Colonic mucosa (tissue), 4 donors: ENCODE measurements at regions of chr3 and their contacts with region 1.

Region 1: GRCh38 chr3:128123538-128124368 is at the start of gene RUVBL1:
- DNase-seq: peak; percentile 97
- H3K4me3 ChIP-seq: peak within 1 kb of the TSS; percentile 95
- H3K27ac ChIP-seq: peak within 1 kb of the TSS; percentile 38
- H3K4me1 ChIP-seq: no peaks in the 10 kb centered on the region
- H3K27me3 ChIP-seq: no peaks in the 10 kb centered on the region
- CTCF ChIP-seq: no peak
- total RNA-seq, gene RUVBL1: 16.1 to 48.2 TPM

Region 2: GRCh38 chr3:128075516-128076482 is 48.0 kb before region 1 on chr3:
- intact Hi-C with region 1: loop called (anchors 10 kb)
- DNase-seq: peak; percentile 94
- H3K4me3 ChIP-seq: peak overlapping the region; percentile 45
- H3K27ac ChIP-seq: peak overlapping the region; percentile 26
- H3K4me1 ChIP-seq: peaks cover 8% of the 10 kb centered on the region
- H3K27me3 ChIP-seq: no peaks in the 10 kb centered on the region
- CTCF ChIP-seq: peak; percentile 98

Region 3: DNA sequence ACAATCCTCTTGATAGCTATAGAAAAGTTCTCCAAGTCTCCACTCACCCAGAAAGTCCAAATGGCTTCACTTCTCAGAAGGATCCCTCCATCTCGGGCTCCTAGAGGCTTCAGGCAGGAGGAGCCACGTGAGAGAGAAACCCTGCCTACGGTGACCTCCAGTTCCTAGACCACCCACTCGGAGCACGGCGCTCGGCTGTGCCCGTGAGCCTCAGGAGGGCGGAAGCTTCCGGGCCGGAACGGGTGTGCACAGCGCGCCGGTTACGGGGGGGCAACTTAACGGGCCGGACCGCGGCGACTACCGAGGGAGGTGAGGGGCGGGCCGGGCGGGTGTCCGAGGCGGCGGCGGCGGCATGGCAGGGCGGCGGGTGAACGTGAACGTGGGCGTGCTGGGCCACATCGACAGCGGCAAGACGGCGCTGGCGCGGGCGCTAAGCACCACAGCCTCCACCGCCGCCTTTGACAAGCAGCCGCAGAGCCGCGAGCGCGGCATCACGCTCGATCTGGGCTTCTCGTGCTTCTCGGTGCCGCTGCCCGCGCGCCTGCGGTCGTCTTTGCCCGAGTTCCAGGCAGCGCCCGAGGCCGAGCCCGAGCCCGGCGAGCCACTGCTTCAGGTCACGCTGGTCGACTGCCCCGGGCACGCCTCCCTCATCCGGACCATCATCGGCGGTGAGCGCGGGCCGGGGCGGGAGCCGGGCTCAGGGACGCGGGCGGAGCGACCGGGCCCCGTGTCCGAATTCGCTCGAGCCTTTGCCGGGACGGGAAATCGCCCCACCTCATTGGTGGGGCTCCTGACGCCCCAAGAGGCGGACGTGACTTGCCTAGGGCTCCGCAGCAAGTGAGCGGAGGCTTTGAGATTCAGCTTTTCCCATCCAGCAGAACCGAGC is 29.6 kb after region 1 on chr3 and contains the start of gene EEFSEC:
- intact Hi-C with region 1: loop called (anchors 2 kb)
- DNase-seq: peak; percentile 83
- H3K4me3 ChIP-seq: peak within 1 kb of the TSS; percentile 99
- H3K27ac ChIP-seq: peak within 1 kb of the TSS; percentile 86
- H3K4me1 ChIP-seq: no peaks in the 10 kb centered on the region
- H3K27me3 ChIP-seq: no peaks in the 10 kb centered on the region
- CTCF ChIP-seq: no peak
- total RNA-seq, gene EEFSEC: 8.6 to 16.6 TPM